ENCODE measurements at regions of chr19 and their contacts with region 1.

Region 1: DNA sequence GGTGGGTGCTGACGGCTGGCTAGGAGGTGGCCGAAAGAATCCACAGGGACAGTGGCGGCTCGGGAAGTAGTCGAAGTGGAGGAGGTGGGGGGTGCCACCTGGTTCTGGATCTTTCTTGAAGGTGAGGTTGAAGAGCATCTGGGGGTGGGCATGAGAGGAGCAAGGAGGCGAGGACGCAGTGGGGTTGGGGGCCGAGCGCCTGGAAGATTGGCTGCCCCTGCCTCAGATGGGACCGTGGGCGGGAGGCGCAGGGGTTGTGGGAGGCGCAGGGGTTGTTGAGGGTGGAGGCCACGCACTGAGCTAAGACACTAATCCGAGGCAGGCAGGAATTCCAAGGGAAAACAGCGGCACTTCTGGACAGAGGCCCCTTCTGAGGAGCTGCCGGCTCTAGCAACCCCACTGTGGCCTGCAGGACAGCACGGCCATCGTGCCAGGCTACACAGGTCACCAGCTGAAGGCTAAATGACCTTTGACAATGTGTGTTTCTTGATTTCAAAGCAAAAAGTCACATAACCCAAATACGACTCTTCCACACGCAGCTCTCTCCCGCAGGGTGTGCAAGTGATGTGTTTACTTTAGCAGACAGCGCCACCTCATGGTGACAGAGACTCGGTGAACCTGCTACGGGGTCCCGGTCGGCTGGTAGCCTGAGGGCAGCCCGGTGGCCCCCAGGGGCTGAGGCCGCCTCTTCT is 44.1 kb upstream of the RANBP3 start:
- DNase-seq: peak; percentile 61 to 80 (median 75)
- ATAC-seq: peak; percentile 93
- H3K4me3 ChIP-seq: no peak overlapping the region
- H3K4me3 Mint-ChIP-seq: no peak overlapping the region
- H3K27ac ChIP-seq: no peak overlapping the region
- H3K27ac Mint-ChIP-seq: peak overlapping the region in 1 of 9 donors; percentile 62
- H3K4me1 ChIP-seq: no peaks in the 10 kb centered on the region
- H3K4me1 Mint-ChIP-seq: peaks cover 7 to 22% (median 15%) of the 10 kb centered on the region in 7 donors
- H3K27me3 ChIP-seq: no peaks in the 10 kb centered on the region
- H3K27me3 Mint-ChIP-seq: no peaks in the 10 kb centered on the region

Region 2: DNA sequence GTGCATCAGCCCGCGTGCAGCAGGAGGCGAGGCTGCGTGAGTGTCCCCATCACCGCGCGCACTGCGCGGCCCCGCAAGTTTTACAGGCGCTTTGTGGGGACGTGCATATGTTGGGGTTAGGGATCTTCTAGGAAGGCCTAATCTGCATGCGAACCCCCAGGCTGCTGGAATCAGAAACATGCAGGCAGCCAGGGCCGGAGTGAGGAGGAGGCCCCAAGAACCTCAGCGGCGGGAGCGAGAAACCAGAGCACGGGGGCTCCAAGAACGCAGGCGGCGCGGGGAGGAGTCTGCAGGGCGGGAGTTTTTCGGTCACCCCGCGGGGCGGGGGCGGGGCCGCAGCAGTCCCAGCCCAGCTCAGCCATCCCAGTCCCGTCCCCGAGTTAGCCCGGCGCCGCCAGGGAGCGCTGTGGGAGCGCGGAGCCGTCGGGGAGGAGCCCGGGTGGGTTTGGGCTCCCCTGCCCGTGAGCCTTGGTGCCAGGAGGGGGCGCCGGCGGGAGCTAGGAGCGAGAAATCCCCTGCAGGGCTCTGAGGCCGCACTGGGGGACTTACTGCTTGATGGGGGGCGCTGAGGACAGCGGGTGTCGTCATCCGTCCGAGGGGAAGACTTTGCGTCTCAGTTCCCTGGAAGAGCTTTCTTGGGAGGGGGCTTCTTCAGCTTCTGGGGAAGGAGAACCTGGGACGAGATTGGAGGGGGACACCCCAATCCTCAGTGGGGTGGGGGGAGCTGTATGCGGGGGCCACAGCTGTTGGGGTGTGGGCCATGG is 218.1 kb before region 1 on chr19:
- CTCF ChIA-PET with region 1: interaction called, 35 read pairs
- POLR2A ChIA-PET with region 1: no interaction called
- intact Hi-C with region 1: loop called in 1 of 2 experiments (anchors 1 kb)
- DNase-seq: peak; percentile 89 to 99 (median 93)
- ATAC-seq: peak; percentile 98
- H3K4me3 ChIP-seq: peak overlapping the region; percentile 64
- H3K4me3 Mint-ChIP-seq: peak overlapping the region; percentile 62 to 87 (median 80)
- H3K27ac ChIP-seq: peak overlapping the region; percentile 44
- H3K27ac Mint-ChIP-seq: peak overlapping the region in 8 of 9 donors; percentile 28 to 83 (median 72)
- H3K4me1 ChIP-seq: peaks cover 13 to 20% of the 10 kb centered on the region in 2 donors
- H3K4me1 Mint-ChIP-seq: peaks cover 7 to 24% (median 21%) of the 10 kb centered on the region in 7 donors
- H3K27me3 ChIP-seq: peaks cover 0 to 2% of the 10 kb centered on the region in 2 donors
- H3K27me3 Mint-ChIP-seq: peaks cover 12 to 45% (median 18%) of the 10 kb centered on the region in 5 donors

Region 3: GRCh38 chr19:5987077-5987818 is 34.8 kb before region 1 on chr19:
- CTCF ChIA-PET with region 1: interaction called, 26 read pairs
- POLR2A ChIA-PET with region 1: no interaction called
- intact Hi-C with region 1: loop called (anchors 1 kb)
- DNase-seq: peak; percentile 52 to 71 (median 64)
- ATAC-seq: peak; percentile 85
- H3K4me3 ChIP-seq: peak overlapping the region; percentile 69
- H3K4me3 Mint-ChIP-seq: peak overlapping the region; percentile 61 to 82 (median 76)
- H3K27ac ChIP-seq: peak overlapping the region; percentile 32
- H3K27ac Mint-ChIP-seq: peak overlapping the region in 6 of 9 donors; percentile 1 to 66 (median 33)
- H3K4me1 ChIP-seq: peaks cover 0 to 5% of the 10 kb centered on the region in 2 donors
- H3K4me1 Mint-ChIP-seq: peaks cover 8 to 47% (median 18%) of the 10 kb centered on the region in 7 donors
- H3K27me3 ChIP-seq: no peaks in the 10 kb centered on the region
- H3K27me3 Mint-ChIP-seq: no peaks in the 10 kb centered on the region

Region 4: GRCh38 chr19:6233827-6234511 is 211.9 kb after region 1 on chr19:
- CTCF ChIA-PET with region 1: no interaction called
- POLR2A ChIA-PET with region 1: no interaction called
- intact Hi-C with region 1: no loop called
- DNase-seq: no peak
- ATAC-seq: peak; percentile 49
- H3K4me3 ChIP-seq: no peak overlapping the region
- H3K4me3 Mint-ChIP-seq: no peak overlapping the region
- H3K27ac ChIP-seq: no peak overlapping the region
- H3K27ac Mint-ChIP-seq: peak overlapping the region in 3 of 9 donors; percentile 11 to 71 (median 20)
- H3K4me1 ChIP-seq: no peaks in the 10 kb centered on the region
- H3K4me1 Mint-ChIP-seq: peaks cover 16 to 46% (median 39%) of the 10 kb centered on the region in 7 donors
- H3K27me3 ChIP-seq: no peaks in the 10 kb centered on the region
- H3K27me3 Mint-ChIP-seq: no peaks in the 10 kb centered on the region

Measured in naive thymus-derived CD4-positive, alpha-beta T cell (primary cell).